Esophagus squamous epithelium (tissue), 5 donors: ENCODE measurements at regions of chr17 and their contacts with region 1.

Region 1: DNA sequence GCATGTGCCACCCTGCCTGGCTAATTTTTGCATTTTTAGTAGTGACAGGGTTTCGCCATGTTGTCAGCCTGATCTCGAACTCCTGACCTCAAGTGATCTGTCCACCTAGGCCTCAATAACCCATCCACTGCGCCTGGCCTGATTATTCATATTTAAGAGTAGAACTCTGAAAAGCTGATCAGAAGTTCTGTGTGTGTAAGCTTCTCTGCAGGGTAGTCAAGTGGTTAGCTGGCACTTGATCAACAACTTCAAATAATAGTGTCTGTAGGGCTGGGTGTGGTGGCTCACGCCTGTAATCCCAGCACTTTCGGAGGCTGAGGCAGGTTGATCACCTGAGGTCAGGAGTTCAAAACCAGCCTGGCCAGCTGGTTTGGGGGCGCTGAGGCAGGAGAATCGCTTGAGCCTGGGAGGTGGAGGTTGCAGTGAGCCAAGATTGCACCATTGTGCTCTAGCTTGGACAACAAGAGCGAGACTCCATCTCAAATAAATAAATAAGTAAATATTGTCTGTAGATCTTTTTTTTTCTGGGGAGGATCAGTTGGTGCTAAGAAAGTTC is 26.1 kb downstream of the RPS6KB1 start:
- DNase-seq: no peak
- H3K4me3 ChIP-seq: no peak overlapping the region
- H3K27ac ChIP-seq: no peak overlapping the region
- H3K4me1 ChIP-seq: no peaks in the 10 kb centered on the region
- H3K27me3 ChIP-seq: no peaks in the 10 kb centered on the region
- CTCF ChIP-seq: no peak
- POLR2A ChIP-seq: no peak

Region 2: DNA sequence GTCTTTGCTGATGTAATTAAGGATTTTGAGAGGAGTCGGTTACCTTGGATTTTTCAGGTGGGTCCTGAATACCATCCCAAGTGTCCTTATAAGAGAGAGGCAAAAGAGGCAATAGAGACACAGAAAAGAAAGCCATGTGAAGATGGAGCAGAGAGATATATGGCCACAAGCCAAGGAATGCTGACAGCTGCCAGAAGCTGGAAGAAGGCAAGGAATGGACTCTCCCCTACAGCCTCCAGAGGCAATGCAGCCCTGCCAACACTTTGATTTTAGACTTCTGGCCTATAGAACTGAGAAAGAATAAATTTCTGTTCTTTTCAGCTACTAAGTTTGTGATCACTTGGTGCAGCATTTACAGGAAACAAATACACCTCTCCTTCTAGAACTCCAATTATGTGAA is 53.7 kb after region 1 on chr17:
- intact Hi-C with region 1: no loop called
- DNase-seq: no peak
- H3K4me3 ChIP-seq: no peak overlapping the region
- H3K27ac ChIP-seq: no peak overlapping the region
- H3K4me1 ChIP-seq: no peaks in the 10 kb centered on the region
- H3K27me3 ChIP-seq: no peaks in the 10 kb centered on the region
- CTCF ChIP-seq: no peak
- POLR2A ChIP-seq: no peak

Region 3: DNA sequence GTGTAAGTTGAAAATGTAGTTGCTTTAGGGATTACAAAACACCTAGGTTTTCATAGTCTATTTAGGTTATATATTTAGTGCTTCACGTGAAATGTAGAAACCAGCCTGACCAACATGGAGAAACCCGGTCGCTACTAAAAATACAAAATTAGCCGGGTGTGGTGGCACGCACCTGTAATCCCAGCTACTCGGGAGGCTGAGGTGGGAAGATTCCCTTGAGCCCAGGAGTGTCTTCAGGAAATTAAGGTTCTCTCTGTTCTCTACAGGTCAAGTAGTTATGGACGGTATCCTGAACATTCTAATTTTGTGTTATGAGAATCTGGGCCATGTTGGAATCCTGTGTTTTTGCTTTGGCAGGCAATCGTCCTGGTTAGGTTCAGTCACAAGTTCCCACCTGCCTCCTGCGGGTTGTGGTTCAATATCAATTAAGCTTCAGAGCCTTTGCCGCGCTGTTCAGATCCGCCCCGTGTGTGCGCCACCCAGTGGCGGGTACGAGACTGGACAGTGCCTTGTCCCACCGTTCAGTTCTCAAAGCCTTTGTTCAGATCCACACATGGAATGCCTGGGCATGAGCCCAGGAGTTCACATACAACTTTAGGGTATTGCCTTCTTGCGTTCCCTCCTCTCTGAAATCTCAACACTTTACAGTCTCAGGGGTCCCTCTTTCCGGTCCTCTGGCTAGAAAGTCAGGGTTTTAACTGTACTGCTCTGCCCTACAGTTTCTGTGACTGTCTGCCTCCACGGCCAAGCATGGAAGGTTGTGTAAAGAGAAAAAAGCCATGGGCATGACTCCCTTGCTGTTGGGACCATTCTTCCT is 118.0 kb after region 1 on chr17:
- intact Hi-C with region 1: loop called (anchors 5 kb)
- DNase-seq: no peak
- H3K4me3 ChIP-seq: peak overlapping the region in 1 of 4 donors; percentile 13
- H3K27ac ChIP-seq: no peak overlapping the region
- H3K4me1 ChIP-seq: peaks cover 0 to 8% (median 0%) of the 10 kb centered on the region in 3 donors
- H3K27me3 ChIP-seq: peaks cover 0 to 15% (median 0%) of the 10 kb centered on the region in 4 donors
- CTCF ChIP-seq: peak; percentile 61 to 93 (median 80)
- POLR2A ChIP-seq: no peak